Natural killer cell (primary cell): ENCODE measurements at regions of chr12 and their contacts with region 1.

Region 1: DNA sequence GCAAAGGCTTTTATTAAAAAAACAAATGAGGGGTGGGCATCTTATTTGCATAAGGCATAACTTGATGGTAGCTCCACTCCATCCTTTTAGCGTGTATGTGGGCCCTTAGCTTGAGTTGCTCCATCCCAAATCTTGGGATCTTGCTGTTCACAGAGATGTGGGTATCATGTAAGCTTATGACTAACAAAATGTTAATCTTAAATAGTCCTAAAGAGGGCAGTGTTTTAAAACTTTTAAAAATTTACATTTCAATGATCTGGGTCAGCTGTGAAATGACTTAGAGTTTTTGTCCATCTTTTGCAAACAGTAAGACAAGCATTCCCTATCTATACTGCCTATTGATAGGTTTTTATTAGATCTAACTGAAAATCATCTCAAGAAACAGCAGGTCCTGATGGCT is 86.0 kb downstream of the SLCO1A2 start:
- DNase-seq: peak in 1 of 2 donors; percentile 3
- ATAC-seq: no peak
- H3K4me3 ChIP-seq: no peak overlapping the region
- H3K4me3 Mint-ChIP-seq: no peak overlapping the region
- H3K27ac ChIP-seq: no peak overlapping the region
- H3K27ac Mint-ChIP-seq: no peak overlapping the region
- H3K4me1 ChIP-seq: no peaks in the 10 kb centered on the region
- H3K4me1 Mint-ChIP-seq: no peaks in the 10 kb centered on the region
- H3K27me3 ChIP-seq: no peaks in the 10 kb centered on the region
- H3K27me3 Mint-ChIP-seq: no peaks in the 10 kb centered on the region
- CTCF ChIP-seq: no peak

Region 2: DNA sequence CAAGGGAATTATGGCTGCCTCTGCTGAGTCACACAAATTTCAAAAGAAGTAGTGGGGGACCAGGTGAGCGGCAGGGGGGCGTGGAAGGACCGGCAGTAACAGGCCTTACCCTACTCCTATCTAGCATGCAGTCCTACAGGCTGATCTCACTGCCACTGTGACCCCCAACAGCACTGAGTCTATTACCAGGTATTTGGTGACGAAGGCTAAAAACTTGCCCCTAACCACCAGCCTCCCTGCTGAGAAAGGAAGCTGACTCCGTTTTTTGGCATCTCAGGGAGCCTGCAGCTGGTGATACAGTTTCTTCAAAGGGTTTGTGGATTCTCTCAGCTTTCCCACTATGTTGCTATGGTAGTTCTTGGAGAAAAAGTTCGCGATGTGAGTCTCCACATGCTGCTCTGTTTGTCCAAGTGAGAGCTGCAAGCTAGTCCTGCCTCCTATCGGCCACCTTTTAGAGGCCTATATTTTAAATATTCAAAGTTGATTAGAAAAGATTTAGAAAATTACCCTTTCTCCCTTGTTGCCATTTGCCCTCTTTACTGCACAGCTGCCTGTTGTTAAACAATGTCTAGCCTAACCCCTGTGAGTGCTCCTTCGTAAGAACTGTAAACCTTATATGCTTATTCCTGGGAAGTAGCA is 174.7 kb before region 1 on chr12:
- intact Hi-C with region 1: no loop called
- DNase-seq: no peak
- ATAC-seq: no peak
- H3K4me3 ChIP-seq: no peak overlapping the region
- H3K4me3 Mint-ChIP-seq: no peak overlapping the region
- H3K27ac ChIP-seq: no peak overlapping the region
- H3K27ac Mint-ChIP-seq: no peak overlapping the region
- H3K4me1 ChIP-seq: no peaks in the 10 kb centered on the region
- H3K4me1 Mint-ChIP-seq: no peaks in the 10 kb centered on the region
- H3K27me3 ChIP-seq: no peaks in the 10 kb centered on the region
- H3K27me3 Mint-ChIP-seq: no peaks in the 10 kb centered on the region
- CTCF ChIP-seq: no peak

Region 3: GRCh38 chr12:21276826-21277225 is 28.1 kb after region 1 on chr12:
- intact Hi-C with region 1: no loop called
- DNase-seq: no peak
- ATAC-seq: no peak
- H3K4me3 ChIP-seq: no peak overlapping the region
- H3K4me3 Mint-ChIP-seq: no peak overlapping the region
- H3K27ac ChIP-seq: no peak overlapping the region
- H3K27ac Mint-ChIP-seq: no peak overlapping the region
- H3K4me1 ChIP-seq: no peaks in the 10 kb centered on the region
- H3K4me1 Mint-ChIP-seq: no peaks in the 10 kb centered on the region
- H3K27me3 ChIP-seq: no peaks in the 10 kb centered on the region
- H3K27me3 Mint-ChIP-seq: no peaks in the 10 kb centered on the region
- CTCF ChIP-seq: no peak

Region 4: GRCh38 chr12:21296751-21297406 is 48.2 kb after region 1 on chr12:
- intact Hi-C with region 1: no loop called
- DNase-seq: peak in 1 of 2 donors; percentile 38
- ATAC-seq: no peak
- H3K4me3 ChIP-seq: no peak overlapping the region
- H3K4me3 Mint-ChIP-seq: no peak overlapping the region
- H3K27ac ChIP-seq: no peak overlapping the region
- H3K27ac Mint-ChIP-seq: no peak overlapping the region
- H3K4me1 ChIP-seq: no peaks in the 10 kb centered on the region
- H3K4me1 Mint-ChIP-seq: no peaks in the 10 kb centered on the region
- H3K27me3 ChIP-seq: no peaks in the 10 kb centered on the region
- H3K27me3 Mint-ChIP-seq: peaks cover 0 to 3% of the 10 kb centered on the region in 2 donors
- CTCF ChIP-seq: peak; percentile 70

Region 5: DNA sequence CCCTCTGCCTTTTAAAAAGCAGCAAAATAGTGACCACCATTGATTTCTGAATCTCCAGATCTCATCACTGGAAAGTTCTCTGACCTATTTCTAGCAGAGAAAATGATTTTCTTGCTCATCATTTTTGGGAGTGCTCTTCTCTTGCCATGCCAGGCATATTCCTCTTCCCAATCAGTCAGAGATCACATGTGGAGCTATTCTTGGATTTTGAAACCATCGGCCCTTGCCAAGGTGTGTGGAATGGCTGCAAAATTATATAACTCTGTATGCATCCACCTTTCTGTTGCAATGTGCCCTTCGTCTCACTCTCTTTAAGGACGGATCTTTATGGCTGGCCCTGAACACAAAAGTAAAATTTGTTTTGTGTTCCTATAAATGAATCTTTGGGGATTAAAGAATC is 434.4 kb after region 1 on chr12:
- intact Hi-C with region 1: loop called (anchors 10 kb)
- DNase-seq: no peak
- ATAC-seq: no peak
- H3K4me3 ChIP-seq: no peak overlapping the region
- H3K4me3 Mint-ChIP-seq: no peak overlapping the region
- H3K27ac ChIP-seq: no peak overlapping the region
- H3K27ac Mint-ChIP-seq: no peak overlapping the region
- H3K4me1 ChIP-seq: no peaks in the 10 kb centered on the region
- H3K4me1 Mint-ChIP-seq: no peaks in the 10 kb centered on the region
- H3K27me3 ChIP-seq: no peaks in the 10 kb centered on the region
- H3K27me3 Mint-ChIP-seq: peaks cover 7 to 9% of the 10 kb centered on the region in 2 donors
- CTCF ChIP-seq: no peak